KBM-7 (cell line): ENCODE measurements at regions of chr18 and their contacts with region 1.

Region 1: GRCh38 chr18:35240664-35241447 is at the start of gene ZNF397:
- DNase-seq: peak; percentile 97

Region 2: DNA sequence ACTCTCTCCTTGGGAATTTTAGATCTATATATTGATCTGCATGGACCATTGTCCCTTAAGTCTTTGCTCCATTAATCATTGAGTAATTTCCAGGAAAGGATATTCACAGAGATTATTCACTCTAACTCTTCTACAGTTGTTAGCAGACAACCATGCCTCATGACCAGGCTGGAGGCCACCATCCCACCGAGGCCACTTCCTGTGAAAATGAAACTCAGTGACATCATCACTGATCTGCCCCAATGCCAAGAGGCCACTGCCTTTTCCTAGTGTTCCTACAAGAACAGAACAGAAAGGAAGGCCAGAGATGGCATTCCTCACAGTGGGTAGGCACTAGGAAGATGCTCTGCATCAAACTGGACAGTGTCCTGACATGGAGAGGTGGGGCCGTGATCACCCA is 369.4 kb before region 1 on chr18:
- in situ Hi-C with region 1: no loop called
- DNase-seq: no peak

Region 3: DNA sequence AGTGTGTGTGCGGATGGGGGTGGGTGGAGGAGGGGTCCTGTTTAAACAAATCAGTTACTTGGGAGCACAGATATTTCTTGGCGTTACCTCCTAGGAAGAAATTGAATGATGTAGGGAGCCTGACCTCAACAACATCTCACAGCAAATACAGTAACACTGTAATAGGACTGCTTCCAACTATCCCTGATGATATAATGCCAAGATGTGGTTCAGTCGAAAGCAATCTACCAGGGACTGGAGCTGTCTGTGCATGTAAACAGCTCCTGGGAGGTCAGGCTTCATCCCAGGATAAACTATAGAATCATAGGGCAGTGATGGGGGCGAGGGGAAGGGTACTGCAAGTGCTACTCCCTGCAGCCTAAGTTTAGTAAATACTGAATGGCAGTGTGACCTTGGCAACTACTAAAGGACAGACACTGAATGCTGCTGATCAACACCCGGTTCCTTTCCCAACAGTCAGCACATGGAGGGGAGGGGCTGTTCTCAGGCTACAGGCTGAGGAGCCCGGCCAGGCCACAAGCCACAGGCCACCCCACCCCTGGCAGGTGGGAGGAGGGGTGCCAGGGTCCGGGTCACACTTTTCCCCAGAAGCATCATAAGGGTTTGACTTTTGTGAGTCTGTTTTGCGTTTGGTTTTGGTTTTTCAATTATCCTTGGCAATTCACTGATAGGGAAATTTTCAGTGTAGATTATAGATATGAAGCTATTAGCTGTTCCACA is 85.3 kb before region 1 on chr18:
- in situ Hi-C with region 1: no loop called
- DNase-seq: no peak

Region 4: GRCh38 chr18:35355140-35355618 is 114.3 kb after region 1 on chr18:
- in situ Hi-C with region 1: loop called (anchors 25 kb)
- DNase-seq: peak; percentile 57

Region 5: DNA sequence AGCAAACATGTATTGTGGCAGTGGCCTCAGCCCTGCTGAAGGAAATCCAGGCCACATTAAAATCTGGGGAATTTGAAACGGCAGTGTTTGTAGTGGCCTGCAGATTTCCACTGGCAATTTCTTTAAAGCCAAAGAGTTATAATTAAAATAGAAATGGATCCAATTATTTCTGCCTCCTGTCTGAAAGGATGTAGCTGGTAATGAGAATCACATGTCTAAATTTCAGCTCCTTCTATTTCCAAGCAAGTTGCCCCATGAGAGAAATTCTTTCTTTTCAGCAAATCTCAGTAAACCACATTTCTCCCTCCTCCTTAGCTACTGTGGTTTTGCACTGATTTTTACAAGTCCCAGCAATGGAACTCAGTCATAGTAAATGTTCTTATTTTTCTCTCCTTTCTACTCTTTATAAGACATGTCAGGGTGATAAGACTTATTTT is 191.7 kb after region 1 on chr18:
- in situ Hi-C with region 1: no loop called
- DNase-seq: no peak